PC-3 (cell line): ENCODE measurements at regions of chr17 and their contacts with region 1.

Region 1: DNA sequence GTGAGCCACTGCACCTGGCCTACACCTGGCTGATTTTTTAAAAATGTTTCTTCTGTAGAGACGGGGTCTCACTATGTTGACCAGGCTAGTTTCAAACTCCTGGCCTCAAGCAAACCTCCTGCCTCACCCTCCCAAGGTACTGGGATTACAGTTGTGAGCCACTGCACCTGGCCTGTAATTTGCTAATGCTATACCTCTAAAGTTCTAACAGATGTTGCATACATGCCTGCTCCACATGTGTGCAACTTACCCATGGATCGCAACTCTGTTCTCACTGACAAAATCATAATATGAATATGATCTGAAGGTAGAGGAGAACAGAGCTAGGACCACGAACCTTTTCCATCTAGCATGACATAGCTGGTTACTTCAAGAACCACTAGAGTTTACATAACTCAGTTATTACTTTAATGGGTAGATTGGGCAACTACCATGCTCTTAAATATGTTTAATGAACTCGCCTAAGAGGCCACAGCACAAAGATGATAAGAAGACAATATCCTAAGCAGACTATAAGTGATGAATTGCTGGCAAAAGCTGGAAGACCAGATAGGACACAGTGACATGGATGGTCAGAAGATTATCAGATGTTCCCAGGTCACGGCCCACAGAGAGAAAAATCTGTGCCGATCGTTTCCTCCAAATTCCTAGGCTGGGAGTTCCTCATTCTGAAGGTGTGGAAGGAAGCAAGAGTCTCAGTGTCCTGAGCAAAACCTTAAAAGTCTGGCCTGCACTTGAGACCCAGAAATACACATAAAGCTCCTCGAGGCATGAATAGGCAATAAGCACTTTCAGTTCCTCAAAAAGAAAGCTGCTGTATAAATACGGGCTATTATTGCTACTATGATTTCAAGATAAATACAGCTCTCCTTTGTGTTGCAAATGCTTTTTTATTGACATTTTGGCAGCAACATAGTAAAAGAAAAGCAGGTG is 53.6 kb upstream of the ICAM2 start:
- DNase-seq: no peak
- ATAC-seq: peak; percentile 23
- H3K4me3 ChIP-seq: peak overlapping the region; percentile 26; the same call in 1 of the 2 replicates
- H3K27ac ChIP-seq: peak overlapping the region; percentile 88
- H3K4me1 ChIP-seq: peaks cover 21% of the 10 kb centered on the region
- H3K27me3 ChIP-seq: no peaks in the 10 kb centered on the region
- CTCF ChIP-seq: no peak

Region 2: GRCh38 chr17:64063766-64064224 is 10.2 kb before region 1 on chr17:
- CTCF ChIA-PET with region 1: no interaction called
- POLR2A ChIA-PET with region 1: no interaction called
- intact Hi-C with region 1: loop called (anchors 2 kb)
- DNase-seq: peak; percentile 40
- ATAC-seq: peak; percentile 64
- H3K4me3 ChIP-seq: no peak overlapping the region
- H3K27ac ChIP-seq: no peak overlapping the region
- H3K4me1 ChIP-seq: peaks cover 21% of the 10 kb centered on the region
- H3K27me3 ChIP-seq: no peaks in the 10 kb centered on the region
- CTCF ChIP-seq: peak; percentile 75

Region 3: GRCh38 chr17:64202675-64203344 is 128.8 kb after region 1 on chr17:
- CTCF ChIA-PET with region 1: no interaction called
- POLR2A ChIA-PET with region 1: no interaction called
- intact Hi-C with region 1: no loop called
- DNase-seq: peak; percentile 86
- ATAC-seq: peak; percentile 79
- H3K4me3 ChIP-seq: no peak overlapping the region
- H3K27ac ChIP-seq: 0 out of 2 replicates have a peak overlapping the region, but pooled peaks have one; percentile 7
- H3K4me1 ChIP-seq: peaks cover 16% of the 10 kb centered on the region
- H3K27me3 ChIP-seq: no peaks in the 10 kb centered on the region
- CTCF ChIP-seq: 0 out of 2 replicates have a peak, but pooled peaks have one; percentile 19